K562 (cell line): ENCODE measurements at regions of chr9 and their contacts with region 1.

Region 1: DNA sequence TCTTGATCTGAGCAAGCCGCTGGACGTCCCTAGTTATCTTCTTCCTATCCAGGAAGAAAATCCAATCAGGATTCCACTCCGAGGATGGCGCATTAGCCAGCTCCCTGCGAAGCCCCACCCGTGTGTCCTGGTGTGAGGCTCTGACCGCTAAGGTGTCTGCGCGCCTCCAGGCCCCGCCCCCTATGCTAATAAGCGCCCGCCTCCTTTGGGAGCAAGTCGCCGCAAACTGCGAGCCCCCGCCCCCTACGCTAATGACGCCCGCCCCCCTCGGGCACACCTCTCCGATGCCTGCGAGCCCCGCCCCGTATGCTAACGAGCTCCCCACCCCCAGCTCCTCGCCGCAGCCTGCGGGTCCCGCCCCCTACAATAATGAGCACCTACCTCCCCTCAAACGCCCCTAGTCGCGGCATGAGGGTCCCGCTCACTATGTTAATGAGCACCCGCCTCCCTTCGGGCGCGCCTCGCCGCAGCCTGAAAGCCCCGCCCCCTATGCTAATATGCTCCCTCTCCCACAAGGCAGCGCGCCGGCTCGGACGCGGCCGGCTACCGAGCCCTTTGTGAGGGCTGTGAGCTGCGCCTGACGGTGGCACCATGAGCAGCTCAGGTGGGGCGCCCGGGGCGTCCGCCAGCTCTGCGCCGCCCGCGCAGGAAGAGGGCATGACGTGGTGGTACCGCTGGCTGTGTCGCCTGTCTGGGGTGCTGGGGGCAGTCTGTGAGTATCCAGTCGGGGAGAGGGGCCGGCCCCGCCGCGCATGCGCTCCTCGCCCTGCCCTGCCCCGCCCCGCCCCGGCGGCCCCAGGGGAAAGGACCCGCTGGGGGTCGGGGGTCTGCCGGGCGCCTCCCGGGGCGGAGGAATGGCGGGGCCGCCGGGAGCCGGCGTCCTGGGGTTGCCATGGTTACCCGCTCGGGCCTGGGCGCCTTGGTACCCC is at the start of gene CACFD1:
- DNase-seq: peak; percentile 96 to 97 (median 97)
- ATAC-seq: peak; percentile 94
- H3K4me3 ChIP-seq: peak within 1 kb of the TSS; percentile 83
- H3K27ac ChIP-seq: peak within 1 kb of the TSS; percentile 72
- H3K4me1 ChIP-seq: peaks cover 5 to 48% of the 10 kb centered on the region in 2 experiments; a peak in 3 of 5 replicates
- H3K27me3 ChIP-seq: peaks cover 27 to 77% of the 10 kb centered on the region in 2 experiments; a peak in 4 of 5 replicates
- CTCF ChIP-seq: no peak
- EP300 ChIP-seq: no peak
- POLR2A ChIP-seq: no peak
- RAD21 ChIP-seq: no peak
- polyA plus RNA-seq, gene CACFD1: not detected

Region 2: DNA sequence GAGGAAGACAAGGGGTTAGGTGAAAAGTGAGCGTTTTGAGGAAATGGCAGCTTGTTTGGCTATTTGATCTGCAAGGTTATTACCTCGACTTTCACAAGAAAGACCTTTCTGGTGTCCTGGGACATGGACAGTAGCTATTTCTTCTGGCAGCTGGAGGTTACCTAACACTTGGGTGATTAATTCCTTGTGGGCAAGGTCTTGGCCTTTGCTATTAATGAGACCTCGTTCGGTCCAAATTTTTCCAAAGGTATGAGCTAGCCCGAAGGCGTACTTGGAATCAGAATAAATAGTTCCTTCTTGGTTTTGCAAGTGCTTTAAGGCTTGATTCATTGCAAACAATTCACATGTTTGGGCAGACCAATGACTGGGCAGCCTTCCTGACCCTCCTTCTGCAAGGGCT is 424.1 kb before region 1 on chr9:
- CTCF ChIA-PET with region 1: no interaction called
- POLR2A ChIA-PET with region 1: no interaction called
- in situ Hi-C with region 1: no loop called
- intact Hi-C with region 1: no loop called
- DNase-seq: no peak
- ATAC-seq: no peak
- H3K4me3 ChIP-seq: no peak overlapping the region
- H3K27ac ChIP-seq: no peak overlapping the region
- H3K4me1 ChIP-seq: peaks cover 7 to 12% of the 10 kb centered on the region in 2 experiments; a peak in 3 of 5 replicates
- H3K27me3 ChIP-seq: no peaks in the 10 kb centered on the region
- CTCF ChIP-seq: no peak
- EP300 ChIP-seq: no peak
- POLR2A ChIP-seq: no peak
- RAD21 ChIP-seq: no peak

Region 3: GRCh38 chr9:133252301-133252780 is 207.4 kb before region 1 on chr9:
- CTCF ChIA-PET with region 1: no interaction called
- POLR2A ChIA-PET with region 1: no interaction called
- in situ Hi-C with region 1: no loop called
- intact Hi-C with region 1: no loop called
- DNase-seq: no peak
- ATAC-seq: peak; percentile 61
- H3K4me3 ChIP-seq: no peak overlapping the region
- H3K27ac ChIP-seq: no peak overlapping the region
- H3K4me1 ChIP-seq: peaks cover 0 to 36% of the 10 kb centered on the region in 2 experiments; a peak in 2 of 5 replicates
- H3K27me3 ChIP-seq: no peaks in the 10 kb centered on the region; a peak in 1 of 5 replicates
- CTCF ChIP-seq: no peak
- EP300 ChIP-seq: no peak
- POLR2A ChIP-seq: no peak
- RAD21 ChIP-seq: no peak

Region 4: GRCh38 chr9:133443982-133444381 is 15.8 kb before region 1 on chr9:
- CTCF ChIA-PET with region 1: no interaction called
- POLR2A ChIA-PET with region 1: interaction called, 14 read pairs
- in situ Hi-C with region 1: no loop called
- intact Hi-C with region 1: no loop called
- DNase-seq: no peak
- ATAC-seq: no peak
- H3K4me3 ChIP-seq: no peak overlapping the region
- H3K27ac ChIP-seq: no peak overlapping the region
- H3K4me1 ChIP-seq: peaks cover 0 to 27% of the 10 kb centered on the region in 2 experiments; a peak in 1 of 5 replicates
- H3K27me3 ChIP-seq: peaks cover 56 to 84% of the 10 kb centered on the region in 2 experiments
- CTCF ChIP-seq: no peak
- EP300 ChIP-seq: no peak
- POLR2A ChIP-seq: no peak
- RAD21 ChIP-seq: no peak